ENCODE measurements at regions of chr11 and their contacts with region 1.

Region 1: GRCh38 chr11:30510750-30511149 is 75.4 kb downstream of the MPPED2 start:
- DNase-seq: no peak
- H3K4me3 ChIP-seq: no peak overlapping the region
- H3K27ac ChIP-seq: no peak overlapping the region
- H3K4me1 ChIP-seq: no peaks in the 10 kb centered on the region
- H3K27me3 ChIP-seq: no peaks in the 10 kb centered on the region
- CTCF ChIP-seq: no peak
- POLR2A ChIP-seq: no peak

Region 2: DNA sequence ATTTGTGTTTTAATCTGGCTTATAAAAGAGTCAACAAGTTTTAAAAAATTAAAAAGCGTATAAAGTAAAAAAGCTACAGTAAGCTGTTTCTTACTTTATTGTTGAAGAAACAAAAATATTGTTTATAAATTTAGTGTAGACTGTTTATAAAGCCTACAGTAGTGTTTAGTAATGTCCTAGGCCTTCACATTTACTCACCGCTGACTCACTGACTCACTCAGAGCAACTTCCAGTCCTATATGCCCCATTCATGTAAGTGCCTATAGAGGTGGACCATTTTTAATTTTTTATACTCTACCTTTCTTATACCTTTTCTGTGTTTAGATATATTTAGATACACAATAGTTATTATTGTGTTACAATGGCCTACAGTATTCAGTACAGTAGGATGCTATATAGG is 63.2 kb after region 1 on chr11:
- intact Hi-C with region 1: loop called (anchors 10 kb)
- DNase-seq: no peak
- H3K4me3 ChIP-seq: no peak overlapping the region
- H3K27ac ChIP-seq: no peak overlapping the region
- H3K4me1 ChIP-seq: no peaks in the 10 kb centered on the region
- H3K27me3 ChIP-seq: no peaks in the 10 kb centered on the region
- CTCF ChIP-seq: no peak
- POLR2A ChIP-seq: no peak

Measured in spleen (tissue), 13 donors.